GM18951 (cell line): ENCODE measurements at regions of chr13 and their contacts with region 1.

Region 1: DNA sequence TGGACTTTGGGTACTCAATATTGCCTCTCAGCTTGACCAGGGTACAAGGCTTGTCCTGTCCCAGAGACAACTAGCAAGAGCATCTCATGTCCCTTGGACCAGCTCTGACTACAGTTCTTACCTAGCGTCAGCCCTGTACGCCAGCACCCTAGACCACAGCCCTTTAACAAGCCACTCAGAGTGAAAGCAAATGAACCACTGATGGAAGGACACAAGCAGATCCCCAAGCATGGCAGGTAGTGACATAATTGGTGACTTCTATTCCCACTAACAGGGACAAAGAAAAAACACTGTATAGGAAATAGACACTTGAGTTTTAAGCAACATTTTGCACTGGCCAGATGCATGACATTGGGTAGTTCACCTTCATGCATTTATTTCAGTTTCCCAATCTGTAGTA is 8.8 kb upstream of the LRCH1 start:
- POLR2A ChIP-seq: no peak

Region 2: DNA sequence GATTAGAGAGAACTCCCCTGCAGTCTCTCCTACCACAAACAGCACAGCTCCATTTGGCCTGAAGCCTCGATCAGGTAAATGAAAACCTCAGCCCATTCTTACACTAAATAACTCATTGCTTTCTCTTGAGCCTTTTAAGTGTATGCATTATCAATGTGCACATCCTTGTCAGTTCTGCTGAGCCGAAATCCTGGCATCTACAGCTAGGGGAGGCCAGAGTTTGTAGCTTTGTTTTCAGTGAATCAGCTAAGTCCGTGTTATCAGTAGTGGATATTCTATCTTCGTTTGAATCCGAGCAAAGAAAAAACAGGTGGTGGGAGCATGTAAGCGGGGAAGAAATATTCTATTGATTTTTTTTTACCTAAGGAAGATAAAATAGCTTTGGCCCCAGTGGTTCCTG is 168.3 kb after region 1 on chr13:
- in situ Hi-C with region 1: loop called (anchors 10 kb)
- POLR2A ChIP-seq: no peak